Esophagus muscularis mucosa (tissue), 4 donors: ENCODE measurements at regions of chr12 and their contacts with region 1.

Region 1: DNA sequence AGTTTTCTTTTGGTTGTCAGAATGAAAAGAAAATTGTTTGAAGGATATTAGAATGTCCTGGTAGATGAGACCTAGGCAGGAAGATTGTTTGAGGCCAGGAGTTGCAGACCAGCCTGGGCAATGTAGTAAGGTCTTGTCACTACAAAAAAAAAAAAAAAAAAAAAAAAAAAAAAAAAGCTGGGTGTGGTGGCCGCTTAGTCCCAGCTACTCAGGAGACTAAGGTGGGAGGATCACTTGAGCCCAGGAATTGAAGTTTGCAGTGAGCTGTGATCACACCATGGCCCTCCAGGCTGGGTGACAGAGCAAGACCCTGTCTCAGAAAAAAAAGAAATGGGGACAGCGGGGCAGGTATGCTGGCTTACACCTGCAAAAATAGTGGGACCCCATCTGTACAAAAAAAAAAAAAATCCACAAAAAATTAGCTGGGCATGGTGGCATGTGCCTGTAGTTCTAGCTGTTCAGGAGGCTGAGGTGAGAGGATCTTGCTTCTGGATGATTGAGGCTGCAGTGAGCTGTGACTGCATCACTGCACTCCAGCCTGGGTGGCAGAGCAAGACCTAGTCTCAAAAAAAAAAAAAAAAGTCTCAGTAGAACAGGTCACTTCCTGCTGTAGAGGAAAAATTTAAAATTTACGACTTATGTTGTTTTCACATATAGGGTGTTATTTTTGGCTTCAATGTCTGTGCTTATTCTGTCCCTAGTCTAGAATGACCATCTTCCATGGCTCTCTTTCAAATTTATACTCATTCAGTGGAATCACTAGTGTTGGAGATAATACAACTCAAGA is 70.7 kb downstream of the PPHLN1 start:
- DNase-seq: no peak
- H3K4me3 ChIP-seq: no peak overlapping the region
- H3K27ac ChIP-seq: no peak overlapping the region
- H3K4me1 ChIP-seq: peaks cover 0 to 5% (median 0%) of the 10 kb centered on the region in 4 donors
- H3K27me3 ChIP-seq: no peaks in the 10 kb centered on the region
- CTCF ChIP-seq: no peak
- EP300 ChIP-seq: no peak
- POLR2A ChIP-seq: no peak

Region 2: DNA sequence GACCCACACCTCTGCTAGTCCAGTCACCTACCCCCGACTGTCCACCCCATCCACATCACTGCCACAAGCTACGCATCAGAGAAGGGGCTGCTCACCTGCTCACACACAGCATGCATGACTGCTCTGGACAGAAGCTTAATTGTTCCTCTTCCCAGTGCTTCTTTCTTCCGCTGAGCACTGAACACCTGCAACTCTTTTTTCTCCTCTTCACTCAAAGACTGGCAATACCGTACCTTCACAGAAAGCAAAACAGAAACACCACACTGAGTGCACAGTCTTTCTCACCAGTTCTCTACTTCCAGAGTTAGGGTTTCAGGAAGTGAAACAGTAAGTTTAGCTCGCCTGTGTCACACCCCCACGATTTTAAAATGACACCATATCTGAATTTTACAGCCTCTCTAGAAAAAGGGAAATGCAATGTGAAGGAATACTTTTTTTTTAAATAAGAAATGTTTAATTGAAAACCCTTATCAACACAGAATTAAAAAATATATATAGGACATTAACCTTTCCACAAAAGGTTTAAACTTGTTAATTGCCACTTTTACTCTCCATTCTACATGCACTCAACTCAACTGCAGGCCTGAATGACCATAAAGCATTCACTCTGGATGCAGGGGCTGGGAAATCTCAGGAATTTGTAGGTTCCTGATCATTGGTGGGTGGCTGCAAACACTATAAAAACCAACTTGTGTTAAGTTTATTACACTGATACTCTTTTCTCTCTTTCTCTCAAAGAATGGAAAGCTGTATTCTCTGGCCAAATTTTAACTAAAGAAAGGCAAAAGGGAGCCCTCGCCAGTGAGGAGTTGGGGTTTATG is 72.9 kb after region 1 on chr12:
- intact Hi-C with region 1: loop called (anchors 10 kb)
- DNase-seq: no peak
- H3K4me3 ChIP-seq: peak overlapping the region in 2 of 4 donors; percentile 0 to 15
- H3K27ac ChIP-seq: peak overlapping the region in 1 of 4 donors; percentile 23
- H3K4me1 ChIP-seq: peaks cover 35 to 56% (median 38%) of the 10 kb centered on the region in 4 donors
- H3K27me3 ChIP-seq: no peaks in the 10 kb centered on the region
- CTCF ChIP-seq: no peak
- EP300 ChIP-seq: no peak
- POLR2A ChIP-seq: no peak